ENCODE measurements at regions of chr6 and their contacts with region 1.

Region 1: DNA sequence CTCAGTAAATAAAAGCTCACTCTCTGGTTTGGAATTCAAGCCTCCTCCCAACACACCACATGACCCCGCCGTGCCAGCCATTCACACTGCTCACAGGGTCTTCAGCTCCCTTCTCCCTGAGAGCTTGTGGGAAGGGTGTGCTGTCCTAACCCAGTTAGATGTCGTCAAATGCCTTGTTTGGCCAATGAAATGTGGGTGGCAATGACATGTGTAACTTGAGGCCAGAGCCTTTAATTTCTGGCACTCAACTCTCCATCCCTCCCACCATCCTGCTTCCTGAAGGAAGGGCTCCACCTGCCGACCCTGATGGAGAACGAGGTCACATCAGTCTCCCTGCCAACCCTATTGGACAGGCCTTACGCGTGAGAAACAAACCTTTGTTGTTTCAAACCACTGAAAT is 224.5 kb upstream of the AGPAT4 start:
- DNase-seq: peak; percentile 19 to 52 (median 32)
- ATAC-seq: peak; percentile 94
- H3K4me3 ChIP-seq: no peak overlapping the region
- H3K27ac ChIP-seq: no peak overlapping the region
- H3K4me1 ChIP-seq: no peaks in the 10 kb centered on the region
- H3K27me3 ChIP-seq: peaks cover 0 to 3% of the 10 kb centered on the region in 2 experiments; a peak in 2 of 5 replicates
- CTCF ChIP-seq: peak; percentile 57 to 65 (median 59)
- EP300 ChIP-seq: no peak
- POLR2A ChIP-seq: no peak
- RAD21 ChIP-seq: peak; percentile 60 to 75

Region 2: GRCh38 chr6:161418463-161418945 is 79.9 kb before region 1 on chr6:
- CTCF ChIA-PET with region 1: no interaction called
- POLR2A ChIA-PET with region 1: no interaction called
- in situ Hi-C with region 1: no loop called
- intact Hi-C with region 1: loop called (anchors 1 kb)
- DNase-seq: peak; percentile 57 to 81 (median 63)
- ATAC-seq: peak; percentile 87
- H3K4me3 ChIP-seq: no peak overlapping the region
- H3K27ac ChIP-seq: no peak overlapping the region
- H3K4me1 ChIP-seq: peaks cover 3 to 8% of the 10 kb centered on the region in 2 experiments; a peak in 4 of 5 replicates
- H3K27me3 ChIP-seq: peaks cover 39 to 55% of the 10 kb centered on the region in 2 experiments; a peak in 4 of 5 replicates
- CTCF ChIP-seq: peak; percentile 62 to 85 (median 76); a peak in 5 of 6 replicates
- EP300 ChIP-seq: no peak
- POLR2A ChIP-seq: no peak
- RAD21 ChIP-seq: peak; percentile 77 to 85

Region 3: GRCh38 chr6:161434921-161435747 is 63.2 kb before region 1 on chr6:
- CTCF ChIA-PET with region 1: no interaction called
- POLR2A ChIA-PET with region 1: no interaction called
- in situ Hi-C with region 1: no loop called
- intact Hi-C with region 1: loop called (anchors 5 kb)
- DNase-seq: no peak
- ATAC-seq: no peak
- H3K4me3 ChIP-seq: no peak overlapping the region
- H3K27ac ChIP-seq: no peak overlapping the region
- H3K4me1 ChIP-seq: peaks cover 3 to 4% of the 10 kb centered on the region in 2 experiments; a peak in 4 of 5 replicates
- H3K27me3 ChIP-seq: peaks cover 30 to 31% of the 10 kb centered on the region in 2 experiments
- CTCF ChIP-seq: no peak
- EP300 ChIP-seq: no peak
- POLR2A ChIP-seq: no peak
- RAD21 ChIP-seq: no peak